AG04449 (cell line): ENCODE measurements at regions of chr11 and their contacts with region 1.

Region 1: DNA sequence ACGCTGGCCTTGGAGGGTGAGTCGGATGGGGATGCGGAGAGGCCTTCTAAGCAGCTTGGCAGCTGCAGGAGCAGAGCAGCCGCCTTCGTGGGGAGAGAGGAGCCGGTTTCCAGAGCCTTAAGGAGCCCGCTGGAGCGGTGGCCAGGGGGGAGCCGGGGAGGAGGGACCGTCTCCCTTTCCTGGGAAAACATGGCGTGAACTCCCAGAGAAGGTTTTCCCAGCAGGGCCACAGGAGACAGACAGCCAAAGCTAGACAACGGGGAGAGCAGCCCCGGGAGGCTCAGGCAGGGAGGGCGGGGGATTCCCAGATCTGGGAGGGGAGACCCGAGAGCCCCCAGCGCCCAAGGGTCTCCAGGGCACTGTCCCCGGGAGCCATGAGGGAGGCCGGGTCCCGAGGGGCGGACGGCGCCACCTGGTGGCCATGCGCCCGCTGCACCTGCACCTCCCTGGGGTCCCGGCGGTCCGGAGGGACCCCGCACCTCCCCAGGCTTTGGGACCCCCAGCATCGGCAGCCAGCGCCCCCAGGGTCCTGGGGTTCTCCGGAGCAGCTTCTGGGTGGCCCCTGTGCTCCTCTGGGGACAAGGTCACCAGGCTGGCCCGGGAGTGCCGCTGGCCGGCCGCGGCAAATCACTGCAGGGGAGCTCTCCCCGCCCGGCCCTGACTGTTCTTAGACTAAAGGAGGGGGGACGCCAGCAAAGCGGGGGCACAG is 2.4 kb upstream of the SYT8 start:
- DNase-seq: no peak
- H3K4me3 ChIP-seq: no peak overlapping the region
- CTCF ChIP-seq: peak; percentile 99

Region 2: DNA sequence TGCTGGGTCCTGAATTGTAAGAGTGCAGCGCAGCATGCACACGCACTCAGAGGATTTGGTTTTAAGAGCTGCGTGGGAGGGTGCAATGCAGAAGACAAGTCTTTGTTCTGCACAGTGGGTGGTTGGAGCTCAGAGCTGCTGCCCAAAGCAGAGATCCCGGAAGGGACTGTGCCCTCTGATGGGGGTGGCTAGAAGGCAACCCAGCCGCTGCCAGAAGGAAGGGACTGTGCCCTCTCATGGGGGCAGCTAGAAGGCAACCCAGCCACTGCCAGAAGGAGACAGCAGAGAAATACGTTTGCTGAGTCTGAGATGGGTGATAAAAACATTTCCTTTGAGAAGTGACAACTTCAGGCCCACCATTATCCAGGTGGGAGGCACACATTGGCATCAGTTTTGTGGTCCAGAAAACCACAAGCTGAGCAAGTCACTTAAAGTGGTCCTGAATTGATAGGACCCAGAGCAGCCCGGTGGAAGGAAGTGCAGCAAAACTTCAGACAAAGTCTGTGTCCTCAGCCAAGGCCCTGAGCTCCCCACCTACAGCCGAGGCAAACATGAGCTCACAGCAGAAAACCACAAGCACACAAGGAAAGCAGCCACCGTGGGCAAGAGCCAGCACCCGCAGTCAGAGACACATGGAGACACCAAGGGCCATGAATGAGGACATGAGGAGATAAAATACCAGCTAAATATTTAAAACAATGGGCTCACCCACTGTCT is 131.1 kb before region 1 on chr11:
- CTCF ChIA-PET with region 1: interaction called, 31 read pairs
- POLR2A ChIA-PET with region 1: no interaction called
- DNase-seq: no peak
- H3K4me3 ChIP-seq: no peak overlapping the region
- CTCF ChIP-seq: no peak

Region 3: GRCh38 chr11:1807264-1807995 is 24.9 kb before region 1 on chr11:
- CTCF ChIA-PET with region 1: interaction called, 10 read pairs
- POLR2A ChIA-PET with region 1: no interaction called
- DNase-seq: no peak
- H3K4me3 ChIP-seq: no peak overlapping the region
- CTCF ChIP-seq: no peak

Region 4: GRCh38 chr11:1845561-1846452 is 13.4 kb after region 1 on chr11:
- CTCF ChIA-PET with region 1: interaction called, 21 read pairs
- POLR2A ChIA-PET with region 1: no interaction called
- DNase-seq: no peak
- H3K4me3 ChIP-seq: no peak overlapping the region
- CTCF ChIP-seq: no peak

Region 5: DNA sequence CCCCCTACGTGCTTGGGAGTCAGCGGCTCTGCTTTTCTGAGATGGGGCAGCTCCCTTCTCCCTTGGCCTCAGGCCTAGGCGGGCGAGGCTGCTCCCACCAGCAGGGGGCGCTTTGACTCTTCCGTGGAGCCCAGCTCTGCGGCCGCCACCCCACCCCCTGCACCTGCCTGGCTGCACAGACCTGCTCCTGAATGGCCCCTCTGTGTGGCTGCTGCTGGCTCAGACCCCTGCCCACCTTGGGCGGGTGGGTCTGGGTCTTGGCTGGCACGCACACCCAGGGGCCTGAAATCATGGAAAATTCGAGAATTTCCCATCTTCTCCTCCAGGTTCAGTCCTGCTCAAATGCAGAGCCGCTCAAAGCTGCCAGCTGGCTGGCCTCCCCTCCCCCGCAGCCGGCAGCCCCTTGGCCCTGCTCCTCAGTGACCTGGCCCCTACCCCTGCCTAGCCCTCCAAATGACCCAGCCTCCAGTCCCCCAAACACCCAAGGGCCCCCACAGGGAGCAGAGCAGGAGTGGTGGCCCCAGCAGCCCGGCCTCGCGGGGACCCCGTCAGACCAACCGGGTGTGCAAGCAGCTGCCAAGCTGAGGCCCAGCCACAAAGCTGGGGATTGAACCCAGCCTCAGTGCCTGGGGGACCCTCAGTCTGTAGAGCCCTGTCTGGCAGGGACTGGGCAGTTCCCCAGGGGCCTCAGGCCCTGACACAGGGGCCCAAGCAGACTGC is 50.3 kb after region 1 on chr11:
- CTCF ChIA-PET with region 1: interaction called, 12 read pairs
- POLR2A ChIA-PET with region 1: no interaction called
- DNase-seq: no peak
- H3K4me3 ChIP-seq: no peak overlapping the region
- CTCF ChIP-seq: peak; percentile 95

Region 6: DNA sequence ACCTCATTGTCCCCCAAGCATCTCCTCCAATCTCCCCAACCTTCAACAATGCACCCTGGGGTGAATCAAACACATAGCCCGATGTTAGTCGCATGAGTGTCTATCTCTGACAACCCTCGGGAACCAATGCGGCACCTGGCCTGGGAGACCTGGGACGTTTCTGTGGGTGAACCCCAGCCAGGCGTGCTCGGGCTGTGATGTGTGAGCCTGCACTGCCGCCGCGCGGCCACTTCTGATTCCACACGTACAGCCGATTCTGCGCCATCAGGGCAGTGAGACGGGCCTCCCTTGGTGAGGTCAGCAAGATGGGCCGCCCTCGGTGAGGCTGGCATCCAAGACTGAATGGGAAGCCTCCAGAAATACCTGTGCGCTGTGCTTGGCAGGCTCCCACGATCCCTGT is 170.4 kb after region 1 on chr11:
- CTCF ChIA-PET with region 1: interaction called, 54 read pairs
- POLR2A ChIA-PET with region 1: no interaction called
- DNase-seq: no peak
- H3K4me3 ChIP-seq: no peak overlapping the region
- CTCF ChIP-seq: no peak

Region 7: DNA sequence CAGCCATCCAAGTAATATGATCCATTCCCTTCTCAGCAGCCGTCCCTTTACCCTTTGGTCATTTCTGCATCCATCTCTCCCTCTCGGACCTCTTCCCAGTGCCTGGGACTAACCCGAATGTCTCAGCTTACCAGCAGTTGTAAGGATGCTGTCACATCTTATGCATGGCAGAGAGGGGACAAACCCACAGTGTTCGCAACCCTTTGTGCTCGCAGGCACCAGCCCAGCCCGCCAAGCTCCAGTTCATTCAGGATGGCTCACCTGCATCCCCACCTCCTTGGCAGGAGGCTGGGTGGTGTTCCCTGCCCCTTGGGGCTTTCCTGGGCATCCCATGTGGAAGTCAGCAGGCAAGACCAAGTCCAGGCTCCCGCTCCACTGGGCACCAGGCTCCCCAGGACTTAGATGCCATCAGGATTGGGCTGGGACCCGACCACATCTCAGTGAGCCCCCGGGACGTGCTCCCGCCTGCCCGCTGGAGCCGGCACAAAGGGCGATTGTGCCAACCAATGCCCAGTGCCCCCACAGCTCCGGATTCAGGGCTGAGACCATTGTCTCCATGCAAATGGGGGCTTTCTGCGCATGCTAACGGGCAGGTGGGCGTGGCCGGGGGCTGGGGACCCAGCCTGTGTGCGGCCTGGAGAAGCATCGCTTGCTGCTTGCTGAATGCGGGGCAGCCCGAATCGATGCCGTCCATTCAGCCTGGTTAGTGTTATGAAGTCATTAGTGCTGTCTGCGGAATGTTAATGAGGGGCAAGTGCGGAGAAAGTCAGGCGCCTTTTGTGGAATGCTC is 758.8 kb after region 1 on chr11:
- CTCF ChIA-PET with region 1: no interaction called
- POLR2A ChIA-PET with region 1: no interaction called
- DNase-seq: no peak
- H3K4me3 ChIP-seq: no peak overlapping the region
- CTCF ChIP-seq: no peak